ENCODE measurements at regions of chr2 and their contacts with region 1.

Region 1: DNA sequence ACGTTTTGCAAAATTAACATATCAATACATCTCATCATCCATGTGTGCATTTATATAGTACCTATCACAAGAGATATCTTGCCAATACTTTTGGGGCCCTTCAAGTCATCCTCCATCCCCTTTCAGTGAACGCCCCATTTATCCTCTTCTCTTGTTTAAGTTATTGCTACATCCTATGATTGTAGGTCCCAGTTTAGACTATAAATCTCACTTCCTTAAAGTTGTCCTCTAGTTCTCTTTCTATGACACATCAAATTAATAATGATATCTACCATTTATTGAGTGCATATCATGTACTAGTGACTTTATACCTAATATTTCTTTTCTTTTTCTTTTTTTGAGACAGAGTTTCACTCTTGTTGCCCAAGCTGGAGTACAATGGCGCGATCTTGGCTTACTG is 28.8 kb upstream of the FBXO11 start:
- DNase-seq: no peak
- H3K4me3 ChIP-seq: no peak overlapping the region
- H3K27ac ChIP-seq: no peak overlapping the region
- H3K4me1 ChIP-seq: no peaks in the 10 kb centered on the region
- H3K27me3 ChIP-seq: no peaks in the 10 kb centered on the region
- CTCF ChIP-seq: no peak
- POLR2A ChIP-seq: no peak

Region 2: GRCh38 chr2:48070415-48070814 is 135.3 kb after region 1 on chr2:
- intact Hi-C with region 1: loop called in 1 of 2 experiments (anchors 10 kb)
- DNase-seq: peak in 1 of 7 donors; percentile 16
- H3K4me3 ChIP-seq: no peak overlapping the region
- H3K27ac ChIP-seq: no peak overlapping the region
- H3K4me1 ChIP-seq: no peaks in the 10 kb centered on the region
- H3K27me3 ChIP-seq: no peaks in the 10 kb centered on the region
- CTCF ChIP-seq: no peak
- POLR2A ChIP-seq: no peak

Region 3: DNA sequence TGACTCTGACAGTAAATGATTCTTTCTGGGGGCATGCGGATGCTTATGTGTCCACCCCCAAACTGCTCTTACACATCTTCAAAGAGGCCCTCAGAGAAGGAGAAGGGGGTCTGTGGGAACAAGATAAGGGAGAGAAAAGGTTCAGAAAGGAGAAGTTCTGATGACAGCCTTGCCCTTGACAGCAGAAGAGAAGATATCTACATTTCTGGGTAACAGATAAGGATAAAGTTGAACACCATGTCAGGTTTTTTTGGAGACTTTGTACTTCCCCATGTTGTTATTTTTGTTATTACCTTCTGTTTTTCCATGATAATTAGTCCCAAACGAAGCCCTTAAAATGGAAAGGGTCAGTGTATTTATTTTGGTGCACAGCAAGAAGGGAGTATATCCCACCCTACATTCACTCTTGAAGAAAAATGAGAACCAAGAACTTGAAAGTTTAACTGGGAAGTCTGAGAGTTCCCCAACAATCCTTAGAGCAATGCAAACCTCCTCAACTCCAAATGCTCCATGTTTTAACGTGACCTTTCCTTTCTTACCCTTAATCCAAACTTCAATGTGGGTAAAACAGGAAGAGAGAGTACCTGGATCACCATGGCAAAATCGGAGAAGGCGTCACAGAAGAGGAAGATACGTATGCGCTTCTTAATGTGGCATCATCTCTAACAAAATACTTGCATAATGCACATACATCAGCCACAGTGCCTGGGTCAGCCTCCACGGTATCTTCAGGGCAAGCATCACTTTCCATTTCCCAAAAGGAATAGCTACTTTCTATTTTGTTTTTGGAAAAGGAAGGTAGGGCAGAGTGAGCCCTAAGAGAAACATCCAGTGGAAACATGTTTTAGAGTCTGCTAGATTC is 330.3 kb after region 1 on chr2:
- intact Hi-C with region 1: no loop called
- DNase-seq: no peak
- H3K4me3 ChIP-seq: no peak overlapping the region
- H3K27ac ChIP-seq: no peak overlapping the region
- H3K4me1 ChIP-seq: no peaks in the 10 kb centered on the region
- H3K27me3 ChIP-seq: no peaks in the 10 kb centered on the region
- CTCF ChIP-seq: no peak
- POLR2A ChIP-seq: no peak

Region 4: DNA sequence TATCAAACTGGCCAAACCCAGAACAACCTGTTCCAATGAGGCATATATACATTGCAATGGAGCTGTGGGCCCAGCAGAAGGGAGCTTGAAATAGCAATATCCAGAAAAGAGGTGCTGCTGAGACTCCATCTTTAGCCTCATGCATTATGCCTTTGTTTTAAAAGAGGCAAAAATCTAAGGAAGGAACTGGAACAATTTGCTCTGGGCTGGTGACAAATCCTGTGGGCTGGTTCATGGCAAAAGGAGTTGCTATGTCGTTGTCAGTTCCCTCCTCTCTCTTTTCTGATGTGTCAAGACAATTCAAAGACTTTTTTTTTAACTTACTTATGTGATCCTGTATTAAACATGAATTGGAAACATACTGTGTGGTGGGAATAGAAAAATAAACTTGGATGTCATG is 1343.5 kb after region 1 on chr2:
- intact Hi-C with region 1: no loop called
- DNase-seq: no peak
- H3K4me3 ChIP-seq: no peak overlapping the region
- H3K27ac ChIP-seq: no peak overlapping the region
- H3K4me1 ChIP-seq: no peaks in the 10 kb centered on the region
- H3K27me3 ChIP-seq: no peaks in the 10 kb centered on the region
- CTCF ChIP-seq: no peak
- POLR2A ChIP-seq: no peak

Measured in adrenal gland (tissue), 19 donors.